Naive thymus-derived CD8-positive, alpha-beta T cell (primary cell): ENCODE measurements at regions of chr17 and their contacts with region 1.

Region 1: GRCh38 chr17:49677933-49678847 is at the start of gene SPOP:
- DNase-seq: peak; percentile 97 to 100 (median 99)
- ATAC-seq: peak; percentile 76 to 89
- H3K4me3 Mint-ChIP-seq: peak within 1 kb of the TSS; percentile 86 to 100 (median 96)
- H3K27ac Mint-ChIP-seq: peak within 1 kb of the TSS; percentile 97 to 100 (median 99)
- H3K4me1 Mint-ChIP-seq: peaks cover 34 to 54% (median 52%) of the 10 kb centered on the region in 4 donors
- H3K27me3 Mint-ChIP-seq: peaks cover 0 to 8% (median 0%) of the 10 kb centered on the region in 5 donors
- polyA plus RNA-seq, gene SPOP: 75.9 to 126 (median 103) TPM

Region 2: DNA sequence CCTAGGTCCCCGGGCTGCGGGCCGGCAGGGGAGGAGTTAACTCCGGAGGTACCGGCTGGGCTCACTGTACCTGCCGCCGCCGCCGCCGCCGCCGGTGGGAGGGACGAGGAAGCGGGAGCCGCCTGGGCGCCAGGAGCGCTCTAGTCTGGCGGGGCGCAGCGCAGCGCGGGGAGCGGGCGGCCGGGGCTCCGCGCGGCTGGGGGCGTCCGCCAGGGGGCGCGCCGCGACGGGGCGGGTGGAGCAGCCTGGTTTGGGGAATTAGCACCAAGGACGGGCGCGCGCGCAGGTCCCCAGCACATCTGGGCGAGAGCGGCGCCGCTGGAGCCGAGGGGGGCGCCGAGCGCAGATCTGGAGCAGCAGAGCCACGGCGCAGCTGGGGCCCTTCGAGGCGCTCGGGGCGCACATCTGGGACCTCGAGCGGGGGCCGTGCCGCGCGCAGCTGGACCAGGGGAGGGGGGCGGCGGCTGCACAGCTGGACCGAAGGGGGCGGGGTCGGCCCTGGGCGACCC is 102.6 kb before region 1 on chr17 and contains the start of gene NXPH3:
- POLR2A ChIA-PET with region 1: no interaction called
- DNase-seq: peak; percentile 43 to 77 (median 58)
- ATAC-seq: peak; percentile 85 to 88
- H3K4me3 Mint-ChIP-seq: peak within 1 kb of the TSS; percentile 32 to 88 (median 75)
- H3K27ac Mint-ChIP-seq: peak within 1 kb of the TSS in 3 of 10 donors; percentile 22 to 56 (median 28)
- H3K4me1 Mint-ChIP-seq: peaks cover 5 to 21% (median 9%) of the 10 kb centered on the region in 4 donors
- H3K27me3 Mint-ChIP-seq: peaks cover 11 to 65% (median 31%) of the 10 kb centered on the region in 5 donors
- polyA plus RNA-seq, gene NXPH3: not detected

Region 3: GRCh38 chr17:49694847-49695683 is 16.9 kb after region 1 on chr17:
- POLR2A ChIA-PET with region 1: interaction called, 60 read pairs
- DNase-seq: peak; percentile 51 to 80 (median 70)
- ATAC-seq: peak; percentile 37 to 45
- H3K4me3 Mint-ChIP-seq: peak overlapping the region; percentile 22 to 80 (median 56)
- H3K27ac Mint-ChIP-seq: peak overlapping the region; percentile 89 to 96 (median 92)
- H3K4me1 Mint-ChIP-seq: peaks cover 45 to 61% (median 52%) of the 10 kb centered on the region in 4 donors
- H3K27me3 Mint-ChIP-seq: no peaks in the 10 kb centered on the region

Region 4: GRCh38 chr17:49971848-49972485 is 293.8 kb after region 1 on chr17:
- POLR2A ChIA-PET with region 1: no interaction called
- DNase-seq: no peak
- ATAC-seq: no peak
- H3K4me3 Mint-ChIP-seq: peak overlapping the region in 7 of 10 donors; percentile 45 to 92 (median 73)
- H3K27ac Mint-ChIP-seq: no peak overlapping the region
- H3K4me1 Mint-ChIP-seq: peaks cover 16 to 54% (median 42%) of the 10 kb centered on the region in 4 donors
- H3K27me3 Mint-ChIP-seq: peaks cover 19 to 87% (median 50%) of the 10 kb centered on the region in 5 donors

Region 5: DNA sequence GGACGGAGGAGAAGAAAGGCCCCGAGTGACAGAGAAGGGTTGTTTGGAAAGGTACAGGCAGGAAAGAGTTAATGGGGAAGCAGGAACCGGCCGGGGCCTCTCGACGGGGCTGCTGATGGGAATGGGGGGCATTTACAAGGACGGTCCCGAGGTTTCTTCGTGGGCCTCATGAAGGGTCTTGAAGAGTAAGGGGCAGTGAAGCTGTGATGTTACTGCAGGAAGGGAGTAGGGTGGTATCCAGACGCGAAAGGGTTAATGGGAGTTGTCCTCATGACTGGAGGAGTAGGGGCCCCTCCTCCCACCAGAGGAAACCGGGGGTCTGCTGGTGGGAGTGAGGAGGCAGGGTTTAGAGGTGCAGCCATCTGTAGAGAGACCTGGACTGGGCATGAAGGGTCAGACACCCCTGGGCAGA is 417.4 kb after region 1 on chr17:
- POLR2A ChIA-PET with region 1: interaction called, 17 read pairs
- DNase-seq: no peak
- ATAC-seq: no peak
- H3K4me3 Mint-ChIP-seq: peak overlapping the region; percentile 95 to 99 (median 98)
- H3K27ac Mint-ChIP-seq: peak overlapping the region; percentile 93 to 98 (median 96)
- H3K4me1 Mint-ChIP-seq: peaks cover 22 to 54% (median 47%) of the 10 kb centered on the region in 4 donors
- H3K27me3 Mint-ChIP-seq: peaks cover 0 to 5% (median 0%) of the 10 kb centered on the region in 5 donors